Calu3 (cell line): ENCODE measurements at regions of chr1 and their contacts with region 1.

Region 1: GRCh38 chr1:186974774-186975181 is 146.0 kb downstream of the PLA2G4A start:
- DNase-seq: no peak
- H3K4me3 Mint-ChIP-seq: no peak overlapping the region
- H3K27ac Mint-ChIP-seq: peak overlapping the region; percentile 70
- H3K4me1 Mint-ChIP-seq: peaks cover 40% of the 10 kb centered on the region
- H3K27me3 Mint-ChIP-seq: no peaks in the 10 kb centered on the region
- CTCF ChIP-seq: no peak

Region 2: DNA sequence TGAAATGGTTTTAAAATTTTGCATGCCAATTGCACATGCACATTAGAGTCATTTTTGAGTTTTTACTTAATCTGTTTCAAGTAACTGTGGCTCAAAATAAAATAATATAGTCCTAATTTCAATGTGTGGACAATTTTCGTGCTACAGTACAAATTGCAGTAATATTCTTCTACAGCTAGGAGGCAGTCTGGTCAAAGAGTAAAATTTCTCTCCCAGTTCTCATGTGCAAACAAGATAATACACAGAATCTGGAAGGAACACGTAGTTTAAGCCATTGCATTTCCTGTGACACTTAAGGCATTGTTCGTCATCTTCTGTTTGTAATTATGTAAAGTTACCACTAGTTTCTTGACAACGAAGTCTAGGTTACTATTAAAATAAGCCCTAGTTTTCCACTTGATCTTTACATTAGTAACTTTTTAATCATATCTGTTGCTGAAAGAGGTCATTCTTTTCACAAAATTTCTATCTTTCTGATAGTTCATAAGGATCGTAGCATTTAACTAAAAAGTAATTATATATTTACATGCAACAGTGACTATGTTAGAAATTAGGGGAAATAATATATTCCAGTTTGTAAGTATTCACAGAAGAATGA is 570.2 kb before region 1 on chr1:
- CTCF ChIA-PET with region 1: no interaction called
- intact Hi-C with region 1: loop called (anchors 5 kb)
- DNase-seq: peak; percentile 13
- H3K4me3 Mint-ChIP-seq: no peak overlapping the region
- H3K27ac Mint-ChIP-seq: no peak overlapping the region
- H3K4me1 Mint-ChIP-seq: no peaks in the 10 kb centered on the region
- H3K27me3 Mint-ChIP-seq: no peaks in the 10 kb centered on the region
- CTCF ChIP-seq: peak; percentile 59

Region 3: DNA sequence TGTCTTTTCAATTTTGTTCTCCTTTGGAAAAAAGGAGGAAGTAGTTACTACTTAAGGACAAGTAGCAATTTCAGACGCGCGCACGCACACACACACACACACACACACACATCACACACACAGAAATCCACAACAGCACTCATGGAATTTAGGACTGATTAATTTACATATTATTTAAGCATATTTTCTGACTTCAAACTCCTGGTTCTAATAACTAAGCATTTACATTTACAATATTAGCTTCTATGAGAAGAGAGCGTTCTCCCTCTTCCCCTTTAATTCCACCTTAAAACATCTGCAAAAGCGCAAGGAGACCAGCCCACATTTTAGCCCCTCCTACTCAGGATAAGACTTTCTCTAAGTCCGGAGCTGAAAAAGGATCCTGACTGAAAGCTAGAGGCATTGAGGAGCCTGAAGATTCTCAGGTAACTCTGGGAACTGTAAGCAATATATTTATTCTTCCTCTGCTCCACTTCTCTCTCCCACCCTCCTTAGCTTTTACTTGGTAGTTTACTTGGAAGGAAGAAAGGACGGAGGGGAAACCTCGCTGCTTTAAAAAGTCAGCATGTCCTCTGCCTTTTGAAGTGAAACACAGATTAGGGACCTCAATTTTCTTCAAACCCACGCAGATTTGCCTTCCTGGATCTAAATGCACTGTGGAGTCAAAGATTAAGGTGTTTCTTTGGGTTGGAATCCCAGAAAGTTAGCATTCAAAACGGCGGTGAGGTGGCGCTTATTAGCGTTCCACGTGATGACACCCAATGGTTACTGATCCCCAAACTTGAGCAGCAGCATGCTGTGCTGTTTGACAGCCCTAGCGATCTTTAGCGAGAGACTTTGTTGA is 145.9 kb before region 1 on chr1 and contains the start of gene PLA2G4A:
- CTCF ChIA-PET with region 1: no interaction called
- intact Hi-C with region 1: loop called (anchors 5 kb)
- DNase-seq: peak; percentile 63
- H3K4me3 Mint-ChIP-seq: peak within 1 kb of the TSS; percentile 97
- H3K27ac Mint-ChIP-seq: peak within 1 kb of the TSS; percentile 90
- H3K4me1 Mint-ChIP-seq: peaks cover 23% of the 10 kb centered on the region
- H3K27me3 Mint-ChIP-seq: no peaks in the 10 kb centered on the region
- CTCF ChIP-seq: no peak
- total RNA-seq, gene PLA2G4A: 29.8 and 36.0 TPM in 2 replicates

Region 4: GRCh38 chr1:186925881-186926669 is 48.7 kb before region 1 on chr1:
- CTCF ChIA-PET with region 1: no interaction called
- intact Hi-C with region 1: loop called (anchors 5 kb)
- DNase-seq: no peak
- H3K4me3 Mint-ChIP-seq: no peak overlapping the region
- H3K27ac Mint-ChIP-seq: peak overlapping the region; percentile 30
- H3K4me1 Mint-ChIP-seq: peaks cover 58% of the 10 kb centered on the region
- H3K27me3 Mint-ChIP-seq: no peaks in the 10 kb centered on the region
- CTCF ChIP-seq: no peak